ENCODE measurements at regions of chr3 and their contacts with region 1.

Region 1: DNA sequence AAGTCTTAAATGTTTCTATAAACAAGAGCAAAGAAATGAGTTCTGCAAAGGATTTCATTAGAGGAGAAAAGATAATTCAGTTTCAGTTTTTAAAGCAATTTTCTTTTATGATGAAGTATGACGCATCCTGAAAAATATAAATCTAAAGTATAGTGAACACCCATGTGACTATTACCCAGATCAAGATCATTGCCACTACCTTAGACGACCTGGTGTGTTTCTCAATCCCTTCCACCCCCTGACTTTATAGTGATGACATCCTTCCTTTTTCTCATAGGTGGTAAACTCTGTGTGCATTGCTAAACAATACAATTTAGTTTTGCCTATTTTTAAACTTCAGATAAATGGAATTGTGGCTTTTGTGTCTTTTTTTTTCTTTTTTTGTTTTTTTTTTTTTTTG is 8.4 kb downstream of the STT3B start:
- DNase-seq: no peak
- ATAC-seq: no peak

Region 2: GRCh38 chr3:31929826-31930502 is 388.9 kb after region 1 on chr3:
- intact Hi-C with region 1: loop called (anchors 2 kb)
- DNase-seq: no peak
- ATAC-seq: no peak

Measured in sciatic nerve (tissue), 2 donors.